Mammary epithelial cell (primary cell): ENCODE measurements at regions of chr19 and their contacts with region 1.

Region 1: GRCh38 chr19:37594304-37594981 is at the starts of genes ZNF540 and ZNF571:
- DNase-seq: peak; percentile 98
- H3K4me3 ChIP-seq: peak within 1 kb of the TSS; percentile 62 to 81 (median 69)
- H3K27ac ChIP-seq: peak within 1 kb of the TSS; percentile 54
- H3K4me1 ChIP-seq: no peaks in the 10 kb centered on the region
- H3K27me3 ChIP-seq: no peaks in the 10 kb centered on the region
- CTCF ChIP-seq: no peak
- total RNA-seq, gene ZNF540: 0.73 to 1.5 TPM
- total RNA-seq, gene ZNF571: 3.8 to 5.3 TPM

Region 2: DNA sequence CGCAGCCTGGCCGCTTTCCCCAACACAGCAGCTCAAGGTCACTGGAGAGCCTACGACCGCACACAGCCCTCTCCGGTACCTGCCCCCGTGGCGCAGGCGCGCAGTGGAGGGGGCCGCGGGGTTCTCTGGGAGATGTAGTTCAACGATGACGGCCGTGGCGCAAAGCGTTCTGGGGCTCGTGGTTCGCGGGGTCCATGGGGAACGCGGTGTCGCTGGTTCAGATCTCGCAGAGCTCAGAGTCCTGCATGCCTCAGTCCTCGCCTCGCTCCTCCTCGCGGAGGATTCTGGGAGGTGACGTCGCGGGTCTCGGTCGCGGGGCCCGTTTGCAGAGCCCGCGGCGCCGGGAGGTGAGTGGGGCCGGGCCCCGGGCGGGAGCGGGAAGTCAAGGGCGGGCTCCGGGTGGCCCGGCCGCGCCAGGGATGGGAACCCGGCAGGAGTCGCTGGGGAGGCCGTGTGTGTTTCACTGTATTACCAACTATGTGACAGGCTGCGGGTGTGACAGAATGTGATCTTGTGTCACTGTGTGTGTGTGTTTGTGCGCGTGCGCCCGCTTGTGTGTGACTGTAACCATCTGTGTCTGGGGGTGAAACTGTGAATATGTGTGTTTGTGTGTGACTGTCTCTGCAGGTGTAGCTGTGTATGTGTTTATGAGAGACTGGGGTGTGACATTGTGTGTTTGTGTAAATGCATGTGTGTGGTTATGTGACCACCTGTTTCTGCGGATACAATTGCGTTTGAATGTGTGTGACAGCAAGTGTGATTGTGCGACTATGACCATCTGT is 223.4 kb before region 1 on chr19 and contains the start of gene ZNF527:
- CTCF ChIA-PET with region 1: no interaction called
- dilution Hi-C with region 1: no loop called
- in situ Hi-C with region 1: no loop called
- intact Hi-C with region 1: loop called (anchors 1 kb)
- DNase-seq: peak; percentile 96
- H3K4me3 ChIP-seq: peak within 1 kb of the TSS; percentile 76 to 82 (median 78)
- H3K27ac ChIP-seq: peak within 1 kb of the TSS; percentile 5
- H3K4me1 ChIP-seq: peaks cover 5% of the 10 kb centered on the region
- H3K27me3 ChIP-seq: no peaks in the 10 kb centered on the region
- CTCF ChIP-seq: no peak
- total RNA-seq, gene ZNF527: 3.2 to 6.5 TPM

Region 3: GRCh38 chr19:37506387-37507166 is 87.9 kb before region 1 on chr19 and contains the start of gene ZNF793:
- CTCF ChIA-PET with region 1: no interaction called
- dilution Hi-C with region 1: no loop called
- in situ Hi-C with region 1: no loop called
- intact Hi-C with region 1: loop called (anchors 10 kb)
- DNase-seq: peak; percentile 90
- H3K4me3 ChIP-seq: peak within 1 kb of the TSS; percentile 50 to 76 (median 65)
- H3K27ac ChIP-seq: peak within 1 kb of the TSS; percentile 79
- H3K4me1 ChIP-seq: no peaks in the 10 kb centered on the region
- H3K27me3 ChIP-seq: no peaks in the 10 kb centered on the region
- CTCF ChIP-seq: no peak
- total RNA-seq, gene ZNF793: 6.0 to 6.2 TPM

Region 4: GRCh38 chr19:37572203-37572602 is 22.2 kb before region 1 on chr19:
- CTCF ChIA-PET with region 1: no interaction called
- dilution Hi-C with region 1: no loop called
- in situ Hi-C with region 1: no loop called
- intact Hi-C with region 1: loop called (anchors 1 kb)
- DNase-seq: peak; percentile 63
- H3K4me3 ChIP-seq: no peak overlapping the region
- H3K27ac ChIP-seq: no peak overlapping the region
- H3K4me1 ChIP-seq: no peaks in the 10 kb centered on the region
- H3K27me3 ChIP-seq: no peaks in the 10 kb centered on the region
- CTCF ChIP-seq: no peak

Region 5: GRCh38 chr19:37655689-37656371 is 61.4 kb after region 1 on chr19:
- CTCF ChIA-PET with region 1: no interaction called
- dilution Hi-C with region 1: no loop called
- in situ Hi-C with region 1: no loop called
- intact Hi-C with region 1: loop called (anchors 1 kb)
- DNase-seq: peak; percentile 86
- H3K4me3 ChIP-seq: peak overlapping the region; percentile 74 to 87 (median 79)
- H3K27ac ChIP-seq: peak overlapping the region; percentile 67
- H3K4me1 ChIP-seq: peaks cover 2% of the 10 kb centered on the region
- H3K27me3 ChIP-seq: no peaks in the 10 kb centered on the region
- CTCF ChIP-seq: no peak

Region 6: GRCh38 chr19:37719111-37719926 is 124.9 kb after region 1 on chr19 and contains the start of gene ZNF607:
- CTCF ChIA-PET with region 1: no interaction called
- dilution Hi-C with region 1: no loop called
- in situ Hi-C with region 1: no loop called
- intact Hi-C with region 1: loop called (anchors 1 kb)
- DNase-seq: peak; percentile 91
- H3K4me3 ChIP-seq: peak within 1 kb of the TSS; percentile 76 to 97 (median 88)
- H3K27ac ChIP-seq: peak within 1 kb of the TSS; percentile 52
- H3K4me1 ChIP-seq: no peaks in the 10 kb centered on the region
- H3K27me3 ChIP-seq: no peaks in the 10 kb centered on the region
- CTCF ChIP-seq: peak; percentile 48 to 71
- total RNA-seq, gene ZNF607: 8.3 to 9.0 TPM

Region 7: DNA sequence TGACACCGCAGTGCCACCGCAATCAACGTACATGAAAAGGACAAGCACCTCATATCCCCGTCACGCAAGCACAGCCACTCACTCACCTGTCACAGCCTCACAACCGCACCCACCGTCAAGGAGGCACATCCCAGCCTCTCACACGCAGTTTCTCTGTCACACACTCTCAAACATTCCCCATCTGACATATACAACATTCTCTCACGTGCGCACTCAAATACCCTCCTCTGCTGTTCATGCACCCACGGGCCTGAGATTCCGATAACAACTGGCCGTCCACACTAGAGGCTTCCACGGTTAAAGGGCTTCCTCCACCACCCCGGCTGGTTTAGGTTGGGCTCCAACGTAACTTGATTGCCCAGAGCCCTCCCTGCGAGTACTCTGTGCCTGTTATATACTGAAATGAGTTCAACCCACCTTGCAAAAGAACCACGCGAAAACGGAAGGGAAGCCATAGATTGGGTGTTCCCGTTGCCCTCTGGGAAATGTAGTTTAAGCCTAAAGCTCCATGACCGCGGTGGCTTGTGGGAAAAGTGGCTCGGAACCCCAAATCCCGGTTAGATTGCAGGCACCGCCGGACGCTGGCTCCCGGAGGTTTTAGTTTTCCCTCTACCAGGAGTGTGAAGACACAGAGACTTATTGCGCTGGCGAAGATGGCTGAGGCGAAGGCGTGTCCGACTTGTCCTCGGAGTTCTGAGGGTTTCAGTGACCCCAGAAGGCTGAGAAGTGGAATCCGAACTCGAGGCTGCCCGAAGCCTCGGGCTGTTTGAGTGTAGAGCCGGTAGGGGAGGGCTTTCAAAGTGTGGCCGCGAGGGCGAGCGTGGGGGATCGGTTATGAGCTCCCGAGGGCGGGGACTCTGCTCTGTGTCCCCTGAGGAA is 184.9 kb after region 1 on chr19 and contains the start of gene ZNF573:
- CTCF ChIA-PET with region 1: no interaction called
- dilution Hi-C with region 1: no loop called
- in situ Hi-C with region 1: no loop called
- intact Hi-C with region 1: loop called (anchors 1 kb)
- DNase-seq: peak; percentile 89
- H3K4me3 ChIP-seq: peak within 1 kb of the TSS; percentile 60 to 79 (median 63)
- H3K27ac ChIP-seq: peak within 1 kb of the TSS; percentile 34
- H3K4me1 ChIP-seq: peaks cover 5% of the 10 kb centered on the region
- H3K27me3 ChIP-seq: no peaks in the 10 kb centered on the region
- CTCF ChIP-seq: peak in 1 of 2 donors; percentile 12
- total RNA-seq, gene ZNF573: 5.5 to 8.7 TPM